Activated naive CD4-positive, alpha-beta T cell treated with anti-CD3 and anti-CD28 coated beads, Interleukin-2, amount 10 ng/mL, durations not matched to agents 7 days and 5 days (primary cell): ENCODE measurements at regions of chr19 and their contacts with region 1.

Region 1: DNA sequence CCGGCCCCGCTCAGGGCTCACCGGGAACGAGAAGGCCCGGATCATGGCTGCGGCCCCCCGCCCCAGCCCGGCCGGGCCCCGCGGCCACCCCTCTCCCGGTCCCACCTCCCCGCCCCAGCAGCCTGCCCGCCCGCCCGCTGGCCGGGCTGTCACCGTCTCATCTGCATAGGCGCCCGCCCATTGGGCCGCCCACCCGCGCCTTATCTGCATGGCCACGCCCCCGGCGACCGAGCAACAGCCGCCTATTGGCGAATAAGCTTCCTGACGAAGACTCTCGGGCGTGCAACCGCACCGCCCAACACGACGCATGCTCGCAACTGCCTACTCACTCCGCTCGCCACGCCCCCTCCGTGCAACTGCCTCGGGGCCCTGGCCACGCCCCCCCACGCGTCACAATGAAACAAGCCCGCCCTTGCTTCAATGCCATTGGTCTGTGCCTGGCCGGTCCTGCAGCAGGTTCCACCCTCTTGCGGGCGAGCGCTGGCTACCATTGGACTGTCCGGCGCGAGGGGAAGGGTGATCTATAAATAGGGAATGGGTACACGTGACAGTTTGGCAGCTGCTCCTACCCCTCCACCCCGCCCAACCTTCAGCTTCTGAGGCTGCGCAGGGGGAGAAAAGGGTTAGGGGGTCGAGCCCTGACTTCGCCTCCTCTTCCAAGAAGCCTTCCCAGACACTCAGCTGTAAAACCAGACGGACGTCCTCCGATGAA is at the start of gene DACT3:
- DNase-seq: peak; percentile 100
- H3K4me3 Mint-ChIP-seq: peak within 1 kb of the TSS; percentile 66
- H3K27ac Mint-ChIP-seq: peak within 1 kb of the TSS; percentile 87
- H3K4me1 Mint-ChIP-seq: peaks cover 23% of the 10 kb centered on the region
- H3K27me3 Mint-ChIP-seq: peaks cover 83% of the 10 kb centered on the region

Region 2: GRCh38 chr19:46520616-46521015 is 140.6 kb before region 1 on chr19:
- CTCF ChIA-PET with region 1: interaction called, 19 read pairs
- DNase-seq: no peak
- H3K4me3 Mint-ChIP-seq: no peak overlapping the region
- H3K27ac Mint-ChIP-seq: peak overlapping the region; percentile 53
- H3K4me1 Mint-ChIP-seq: peaks cover 74% of the 10 kb centered on the region
- H3K27me3 Mint-ChIP-seq: peaks cover 5% of the 10 kb centered on the region

Region 3: DNA sequence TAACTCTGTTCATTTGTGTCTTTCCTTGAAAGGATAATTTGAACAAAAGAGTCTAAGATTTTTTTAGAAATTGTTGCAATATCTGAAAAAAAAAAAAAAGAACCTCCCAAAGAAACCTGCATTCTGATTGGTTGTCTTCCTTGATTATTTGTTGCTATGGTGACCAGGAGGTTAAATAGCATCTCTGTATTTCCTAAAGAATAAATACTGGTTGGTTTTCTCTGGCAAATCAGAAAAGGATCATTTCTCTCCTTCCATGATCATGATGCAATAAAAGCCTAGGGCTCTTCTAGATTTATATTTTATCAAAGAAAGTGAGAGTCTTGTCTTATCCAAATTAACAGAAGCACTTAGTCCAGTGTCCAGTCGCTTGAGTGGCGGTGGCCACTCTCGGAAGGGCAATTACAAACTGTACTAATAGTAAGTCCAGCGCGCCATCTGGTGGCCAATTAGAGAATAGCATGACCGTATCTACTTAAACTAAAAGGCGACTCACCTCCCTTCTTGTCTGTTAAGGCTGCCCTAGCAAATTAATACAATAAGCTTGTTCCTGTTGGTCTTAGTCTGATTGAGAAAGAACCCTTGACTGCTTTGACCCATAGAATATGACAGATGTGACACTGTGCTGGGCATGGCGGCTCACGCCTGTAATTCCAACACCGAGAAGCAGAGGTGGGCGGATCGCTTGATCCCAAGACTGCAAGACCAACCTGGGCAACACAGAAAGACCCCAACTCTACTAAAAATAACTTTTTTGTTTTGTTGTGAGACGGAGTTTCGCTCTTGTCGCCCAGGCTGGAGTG is 118.5 kb before region 1 on chr19:
- CTCF ChIA-PET with region 1: interaction called, 10 read pairs
- DNase-seq: peak; percentile 87
- H3K4me3 Mint-ChIP-seq: no peak overlapping the region
- H3K27ac Mint-ChIP-seq: no peak overlapping the region
- H3K4me1 Mint-ChIP-seq: peaks cover 11% of the 10 kb centered on the region
- H3K27me3 Mint-ChIP-seq: peaks cover 29% of the 10 kb centered on the region

Region 4: DNA sequence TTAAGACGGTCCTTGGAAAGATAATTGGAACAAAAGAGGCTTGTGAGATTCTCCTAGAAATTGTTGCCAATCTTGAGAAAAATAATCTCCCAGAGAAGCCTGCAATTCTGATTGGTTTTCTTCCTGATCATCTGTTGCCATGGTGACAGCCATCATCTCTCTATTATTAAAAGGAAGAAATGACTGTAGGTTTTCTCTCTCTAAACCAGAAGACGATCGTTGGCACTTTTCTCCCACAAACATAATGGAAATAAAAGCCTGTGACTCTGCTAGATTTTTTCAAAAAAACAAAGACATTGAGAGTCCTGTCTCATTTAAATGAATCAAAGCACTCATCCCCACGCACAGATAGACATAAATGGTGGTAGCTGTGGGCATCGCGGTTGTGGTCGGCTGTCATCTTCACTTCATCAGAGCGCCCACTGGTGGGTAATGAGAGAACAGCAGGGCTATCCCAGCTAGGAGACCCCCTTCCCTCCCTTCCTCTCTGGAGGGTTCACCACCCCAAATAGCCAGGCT is 81.8 kb before region 1 on chr19:
- CTCF ChIA-PET with region 1: no interaction called
- DNase-seq: peak; percentile 49
- H3K4me3 Mint-ChIP-seq: no peak overlapping the region
- H3K27ac Mint-ChIP-seq: no peak overlapping the region
- H3K4me1 Mint-ChIP-seq: peaks cover 27% of the 10 kb centered on the region
- H3K27me3 Mint-ChIP-seq: peaks cover 17% of the 10 kb centered on the region

Region 5: DNA sequence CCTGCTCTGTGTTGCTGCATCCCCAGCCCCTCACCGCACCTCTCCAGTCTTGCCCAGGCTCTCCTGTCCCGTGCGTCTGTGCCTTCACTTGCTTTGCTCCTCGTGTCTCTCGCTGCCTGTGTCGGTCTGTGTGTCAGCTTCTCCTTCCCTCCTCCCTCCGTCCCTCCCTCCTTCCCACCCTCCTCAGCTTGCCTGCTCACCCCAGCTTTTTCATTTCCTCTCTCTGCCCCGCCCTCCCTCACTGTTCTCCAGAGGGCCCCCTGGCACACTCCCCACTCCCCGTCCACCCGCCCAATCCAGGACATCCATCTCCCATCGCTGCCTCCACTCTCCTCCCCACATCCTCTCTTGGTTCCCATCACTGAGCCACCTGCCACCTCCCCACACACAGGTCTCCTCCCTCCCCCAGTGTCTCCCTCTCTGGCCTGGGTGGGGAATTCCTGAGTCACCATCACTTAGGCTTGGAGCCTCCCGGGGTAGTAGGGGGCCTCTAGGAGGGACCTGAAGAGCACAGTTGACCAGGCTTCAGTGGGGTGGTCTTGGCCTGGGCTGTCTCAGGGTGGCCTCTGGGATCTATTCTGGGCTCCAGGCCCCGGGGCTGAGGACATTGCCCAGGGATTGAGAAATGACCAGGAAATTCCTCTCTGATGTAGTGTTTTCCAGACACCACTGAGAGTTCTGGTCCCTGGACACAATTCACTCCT is 36.1 kb before region 1 on chr19 and contains the start of gene PTGIR:
- CTCF ChIA-PET with region 1: interaction called, 17 read pairs
- DNase-seq: peak; percentile 52
- H3K4me3 Mint-ChIP-seq: peak within 1 kb of the TSS; percentile 73
- H3K27ac Mint-ChIP-seq: peak within 1 kb of the TSS; percentile 84
- H3K4me1 Mint-ChIP-seq: peaks cover 57% of the 10 kb centered on the region
- H3K27me3 Mint-ChIP-seq: peaks cover 4% of the 10 kb centered on the region